Esophagus muscularis mucosa (tissue), 4 donors: ENCODE measurements at regions of chr15 and their contacts with region 1.

Region 1: GRCh38 chr15:89647191-89647851 is 7.9 kb downstream of the KIF7 start:
- DNase-seq: no peak
- H3K4me3 ChIP-seq: no peak overlapping the region
- H3K27ac ChIP-seq: no peak overlapping the region
- H3K4me1 ChIP-seq: peaks cover 3 to 14% (median 8%) of the 10 kb centered on the region in 4 donors
- H3K27me3 ChIP-seq: no peaks in the 10 kb centered on the region
- CTCF ChIP-seq: peak; percentile 78 to 90 (median 87)
- EP300 ChIP-seq: no peak
- POLR2A ChIP-seq: no peak

Region 2: GRCh38 chr15:89690276-89691218 is 43.2 kb after region 1 on chr15 and contains the starts of genes PEX11A and WDR93:
- intact Hi-C with region 1: loop called (anchors 5 kb)
- DNase-seq: peak; percentile 92
- H3K4me3 ChIP-seq: peak within 1 kb of the TSS; percentile 71 to 96 (median 80)
- H3K27ac ChIP-seq: peak within 1 kb of the TSS; percentile 33 to 79 (median 76)
- H3K4me1 ChIP-seq: peaks cover 6 to 45% (median 27%) of the 10 kb centered on the region in 4 donors
- H3K27me3 ChIP-seq: no peaks in the 10 kb centered on the region
- CTCF ChIP-seq: peak in 1 of 3 experiments; percentile 17
- EP300 ChIP-seq: no peak
- POLR2A ChIP-seq: peak; percentile 23
- total RNA-seq, gene PEX11A: 10.8 to 20.2 (median 15.4) TPM
- total RNA-seq, gene WDR93: 0.13 to 0.42 (median 0.17) TPM in 3 of 4 donors, not detected in the other

Region 3: DNA sequence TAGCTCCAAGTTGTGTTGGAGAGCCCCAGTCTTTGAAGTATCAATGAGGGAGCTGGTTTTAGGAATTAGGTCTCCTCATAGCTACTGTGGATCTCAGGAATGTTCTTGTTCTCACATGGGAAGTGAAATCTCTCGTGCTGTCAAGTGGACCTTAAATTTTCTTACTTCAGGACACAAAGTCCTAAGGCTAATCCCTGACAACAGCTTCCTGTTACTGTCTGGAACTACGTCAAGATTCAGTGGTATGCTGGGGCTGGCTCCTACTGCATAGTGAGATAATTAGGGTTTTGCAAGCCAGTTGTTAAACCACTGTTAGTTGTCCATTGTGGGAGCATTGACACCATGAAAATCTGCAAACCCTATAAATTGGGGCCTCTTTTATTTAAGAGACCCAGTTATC is 80.9 kb after region 1 on chr15:
- intact Hi-C with region 1: no loop called
- DNase-seq: no peak
- H3K4me3 ChIP-seq: no peak overlapping the region
- H3K27ac ChIP-seq: peak overlapping the region; percentile 45 to 65 (median 53)
- H3K4me1 ChIP-seq: peaks cover 0 to 12% (median 7%) of the 10 kb centered on the region in 4 donors
- H3K27me3 ChIP-seq: peaks cover 0 to 5% (median 0%) of the 10 kb centered on the region in 4 donors
- CTCF ChIP-seq: no peak
- EP300 ChIP-seq: peak; percentile 51
- POLR2A ChIP-seq: no peak

Region 4: GRCh38 chr15:89750560-89751542 is 103.5 kb after region 1 on chr15 and contains the start of gene MESP1:
- intact Hi-C with region 1: loop called (anchors 2 kb)
- DNase-seq: peak; percentile 95
- H3K4me3 ChIP-seq: peak within 1 kb of the TSS; percentile 61 to 88 (median 64)
- H3K27ac ChIP-seq: peak within 1 kb of the TSS; percentile 73 to 77 (median 74)
- H3K4me1 ChIP-seq: peaks cover 15 to 18% (median 17%) of the 10 kb centered on the region in 4 donors
- H3K27me3 ChIP-seq: peaks cover 0 to 14% (median 0%) of the 10 kb centered on the region in 4 donors
- CTCF ChIP-seq: peak; percentile 58 to 90 (median 67)
- EP300 ChIP-seq: no peak
- POLR2A ChIP-seq: no peak
- total RNA-seq, gene MESP1: 0.50 to 2.8 (median 1.7) TPM

Region 5: DNA sequence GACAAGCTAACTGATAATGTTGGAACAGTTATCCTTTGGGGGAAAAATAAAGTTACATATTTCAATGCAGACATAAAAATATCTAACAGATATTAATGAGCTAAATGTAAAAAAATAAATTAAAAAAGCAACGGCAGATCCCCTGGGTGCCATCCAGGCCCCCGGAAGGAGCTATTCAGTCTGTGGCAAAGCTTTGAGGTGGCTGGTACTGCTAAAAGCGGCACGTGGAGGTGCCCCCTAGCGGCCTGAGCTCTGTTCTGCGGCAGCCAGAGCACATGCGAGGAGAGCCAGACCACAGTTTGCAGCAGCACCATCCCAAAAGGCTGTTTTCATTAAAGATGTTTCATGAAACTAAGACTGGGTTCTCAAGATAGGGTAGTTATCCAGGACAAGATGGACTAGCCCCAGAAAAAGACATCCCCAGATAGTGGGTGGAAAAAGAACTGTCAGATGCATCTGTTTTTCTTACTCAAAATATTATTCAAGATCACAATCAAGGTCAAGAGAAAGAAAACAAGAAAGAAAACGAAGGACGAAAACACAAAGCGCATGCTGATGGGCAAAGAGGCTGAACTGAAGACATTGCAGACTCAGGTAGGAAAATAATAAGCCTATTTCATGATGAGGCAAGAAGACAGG is 227.7 kb after region 1 on chr15:
- intact Hi-C with region 1: loop called (anchors 10 kb)
- DNase-seq: peak; percentile 93
- H3K4me3 ChIP-seq: no peak overlapping the region
- H3K27ac ChIP-seq: no peak overlapping the region
- H3K4me1 ChIP-seq: peaks cover 0 to 13% (median 6%) of the 10 kb centered on the region in 4 donors
- H3K27me3 ChIP-seq: no peaks in the 10 kb centered on the region
- CTCF ChIP-seq: peak; percentile 86 to 91 (median 87)
- EP300 ChIP-seq: no peak
- POLR2A ChIP-seq: no peak